ENCODE measurements at regions of chr2 and their contacts with region 1.

Region 1: DNA sequence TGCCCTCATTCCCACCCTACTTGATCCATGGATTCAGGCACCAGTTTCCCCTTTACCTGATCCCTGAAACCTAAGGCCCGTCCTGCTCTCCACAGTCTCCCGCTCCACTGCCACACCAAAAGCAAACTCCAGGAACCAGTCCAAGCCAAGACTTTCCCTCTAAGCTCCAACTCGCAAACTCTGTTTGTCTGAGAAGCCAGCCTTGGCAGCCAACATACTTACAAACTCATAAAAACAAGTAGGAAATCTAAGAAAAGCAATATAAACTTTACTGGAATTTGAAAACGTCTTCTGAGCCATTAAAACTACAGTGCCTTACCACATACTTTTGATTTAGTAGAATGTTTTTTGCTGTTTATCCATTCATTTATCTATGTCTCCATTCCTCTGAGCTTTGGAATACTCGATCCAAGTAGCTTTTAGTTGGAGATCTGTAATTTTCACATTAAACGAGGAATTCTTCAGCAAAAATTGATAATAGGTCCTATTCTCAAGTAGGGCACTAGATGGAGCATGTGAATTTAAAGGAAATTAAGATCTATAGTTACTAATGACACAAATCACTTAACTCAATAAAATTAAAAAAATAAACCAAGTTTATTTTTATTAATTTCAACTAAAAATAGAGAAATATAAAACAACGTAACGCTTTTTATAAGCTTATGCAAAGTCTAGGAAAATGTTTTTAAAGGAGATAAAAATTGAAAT is 199.7 kb downstream of the MYO3B start:
- DNase-seq: no peak
- H3K4me3 ChIP-seq: no peak overlapping the region
- CTCF ChIP-seq: no peak

Region 2: GRCh38 chr2:170361090-170361936 is 16.3 kb before region 1 on chr2:
- CTCF ChIA-PET with region 1: interaction called, 18 read pairs
- POLR2A ChIA-PET with region 1: no interaction called
- DNase-seq: no peak
- H3K4me3 ChIP-seq: no peak overlapping the region
- CTCF ChIP-seq: peak; percentile 72

Region 3: DNA sequence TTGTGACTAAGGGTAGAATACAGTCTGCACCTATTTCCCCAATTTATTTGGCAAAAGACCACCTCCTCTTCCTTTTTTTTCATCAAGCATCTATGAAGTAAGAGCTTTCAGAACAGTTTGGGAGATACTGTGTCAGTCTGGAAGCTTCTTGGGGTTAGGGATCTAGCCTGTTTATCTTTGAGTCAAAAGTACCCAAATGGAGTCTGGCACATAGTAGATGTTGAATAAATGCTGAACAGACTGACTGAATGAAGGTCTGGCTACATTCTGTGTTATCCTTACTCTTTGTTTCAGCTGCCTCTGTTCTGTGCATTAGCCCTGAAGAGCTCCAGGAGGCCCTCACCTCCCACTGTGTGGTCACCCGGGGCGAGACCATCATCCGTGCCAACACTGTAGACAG is 23.5 kb after region 1 on chr2:
- CTCF ChIA-PET with region 1: no interaction called
- POLR2A ChIA-PET with region 1: no interaction called
- DNase-seq: no peak
- H3K4me3 ChIP-seq: no peak overlapping the region
- CTCF ChIP-seq: no peak

Measured in AG04449 (cell line).